ENCODE measurements at regions of chr14 and their contacts with region 1.

Region 1: GRCh38 chr14:64914237-64914971 is at the start of gene CHURC1:
- DNase-seq: peak; percentile 95 to 99 (median 98)

Region 2: GRCh38 chr14:64960762-64961278 is 46.4 kb after region 1 on chr14:
- intact Hi-C with region 1: loop called (anchors 10 kb)
- DNase-seq: no peak